Testis (tissue), 5 donors: ENCODE measurements at regions of chr19 and their contacts with region 1.

Region 1: GRCh38 chr19:27974082-27974513 is 1238.9 kb downstream of the UQCRFS1 start:
- DNase-seq: peak; percentile 71
- H3K4me3 ChIP-seq: no peak overlapping the region
- H3K27ac ChIP-seq: no peak overlapping the region
- H3K4me1 ChIP-seq: no peaks in the 10 kb centered on the region
- H3K27me3 ChIP-seq: no peaks in the 10 kb centered on the region
- CTCF ChIP-seq: peak; percentile 61 to 68 (median 62)
- POLR2A ChIP-seq: no peak

Region 2: DNA sequence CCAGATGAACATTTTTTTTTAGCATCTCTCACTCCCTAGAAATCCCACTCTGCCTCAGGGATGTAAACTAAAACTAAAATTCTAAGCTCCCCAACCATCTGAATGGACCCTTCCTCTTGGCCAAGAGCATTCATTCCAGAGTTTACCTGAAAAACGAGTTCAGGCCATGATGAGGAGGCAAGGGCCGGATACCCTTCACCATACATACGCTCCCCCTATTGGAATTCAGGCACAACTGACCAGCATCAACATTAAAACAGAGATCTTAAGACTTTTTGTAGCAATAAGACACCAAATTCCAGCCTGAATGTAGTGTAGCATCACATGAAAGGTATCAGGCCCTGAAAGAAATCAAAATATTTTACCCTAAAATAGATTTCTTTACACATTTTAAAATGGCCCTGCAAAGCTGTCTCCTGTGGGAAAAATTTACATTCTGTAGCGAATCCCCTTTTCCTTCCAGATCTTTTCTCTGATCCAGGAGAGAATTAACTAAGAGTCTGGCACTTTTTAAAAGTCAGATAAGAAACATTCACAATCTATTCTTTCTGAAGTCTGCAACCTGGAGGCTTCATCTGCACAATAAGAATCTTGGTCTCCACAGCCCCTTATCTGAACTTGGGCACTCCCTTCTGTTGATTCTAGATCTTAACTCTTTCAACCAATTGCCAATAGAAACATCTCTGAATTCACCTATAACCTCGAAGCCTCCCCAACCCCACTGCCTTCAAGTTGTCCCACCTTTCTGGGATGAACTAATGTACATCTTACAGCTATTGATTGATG is 350.4 kb after region 1 on chr19:
- intact Hi-C with region 1: loop called (anchors 10 kb)
- DNase-seq: no peak
- H3K4me3 ChIP-seq: no peak overlapping the region
- H3K27ac ChIP-seq: no peak overlapping the region
- H3K4me1 ChIP-seq: peaks cover 5% of the 10 kb centered on the region
- H3K27me3 ChIP-seq: no peaks in the 10 kb centered on the region
- CTCF ChIP-seq: no peak
- POLR2A ChIP-seq: no peak